Sigmoid colon (tissue), 7 donors: ENCODE measurements at regions of chr10 and their contacts with region 1.

Region 1: DNA sequence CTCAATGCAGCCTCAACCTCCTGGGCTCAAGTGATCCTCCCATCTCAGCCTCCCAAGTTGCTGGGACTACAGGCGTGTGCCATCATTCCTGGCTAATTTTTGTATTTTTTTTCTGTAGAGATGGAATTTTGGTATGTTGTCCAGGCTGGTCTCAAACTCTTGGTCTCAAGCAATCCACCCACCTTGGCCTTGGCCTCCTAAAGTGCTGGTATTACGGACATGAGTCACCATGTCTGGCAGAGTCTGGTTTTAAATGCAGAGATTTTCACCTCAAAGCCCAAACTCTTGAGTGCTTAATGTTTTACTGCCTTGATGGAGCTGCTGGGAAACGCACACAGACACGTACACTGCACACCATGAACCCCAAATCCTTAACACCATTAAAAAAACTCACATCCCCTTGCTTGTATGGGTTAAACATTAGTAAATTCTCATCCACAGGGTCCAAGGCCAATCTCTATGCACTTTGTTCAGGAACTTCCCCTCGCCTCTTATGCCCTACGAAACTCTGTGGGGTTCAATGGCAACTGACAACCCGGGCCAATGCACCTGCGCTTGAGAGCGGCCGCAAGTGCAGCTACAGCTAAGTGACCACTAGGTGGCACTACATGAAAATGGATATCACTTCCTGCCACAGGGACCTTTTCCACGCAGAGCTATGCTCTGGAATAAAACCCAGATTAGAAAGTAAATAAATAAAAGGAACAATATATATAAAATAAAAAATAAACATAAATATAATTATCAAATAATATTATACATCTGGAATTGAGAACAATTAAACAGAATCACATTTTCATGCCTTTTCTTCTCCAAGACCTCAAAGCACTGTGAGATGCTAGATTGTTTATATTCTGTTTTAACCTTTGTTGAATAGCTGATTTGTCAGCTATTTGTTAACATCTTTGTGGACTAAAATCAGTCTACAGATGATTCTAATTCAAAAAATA is 66.9 kb upstream of the AFAP1L2 start:
- DNase-seq: peak; percentile 76
- H3K4me3 ChIP-seq: no peak overlapping the region
- H3K27ac ChIP-seq: no peak overlapping the region
- H3K4me1 ChIP-seq: peaks cover 0 to 3% (median 0%) of the 10 kb centered on the region in 4 donors
- H3K27me3 ChIP-seq: no peaks in the 10 kb centered on the region
- CTCF ChIP-seq: peak in 3 of 4 experiments; percentile 77 to 82 (median 82)
- EP300 ChIP-seq: no peak
- POLR2A ChIP-seq: no peak

Region 2: DNA sequence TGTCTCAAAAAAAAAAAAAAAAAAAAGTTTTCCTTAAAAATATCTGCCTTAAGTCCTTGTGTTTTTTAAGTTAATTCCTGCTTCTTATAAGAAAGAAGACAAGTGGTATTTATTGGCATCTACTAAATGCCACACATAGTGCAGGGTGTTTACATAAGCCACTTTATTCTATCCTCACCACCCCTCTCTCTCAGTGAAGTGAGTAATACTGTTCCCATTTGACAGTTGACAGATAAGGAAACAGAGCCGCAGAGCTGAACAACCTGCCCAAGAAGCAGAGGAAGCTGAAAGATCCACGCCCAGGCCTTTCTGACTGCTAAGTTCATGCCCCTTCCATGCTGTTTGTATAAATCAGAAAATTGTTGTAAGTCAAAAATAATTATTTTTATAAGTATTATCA is 132.7 kb after region 1 on chr10:
- intact Hi-C with region 1: no loop called
- DNase-seq: no peak
- H3K4me3 ChIP-seq: no peak overlapping the region
- H3K27ac ChIP-seq: peak overlapping the region in 2 of 4 donors; percentile 34 to 52
- H3K4me1 ChIP-seq: peaks cover 0 to 24% (median 5%) of the 10 kb centered on the region in 4 donors
- H3K27me3 ChIP-seq: no peaks in the 10 kb centered on the region
- CTCF ChIP-seq: no peak
- EP300 ChIP-seq: no peak
- POLR2A ChIP-seq: no peak

Region 3: DNA sequence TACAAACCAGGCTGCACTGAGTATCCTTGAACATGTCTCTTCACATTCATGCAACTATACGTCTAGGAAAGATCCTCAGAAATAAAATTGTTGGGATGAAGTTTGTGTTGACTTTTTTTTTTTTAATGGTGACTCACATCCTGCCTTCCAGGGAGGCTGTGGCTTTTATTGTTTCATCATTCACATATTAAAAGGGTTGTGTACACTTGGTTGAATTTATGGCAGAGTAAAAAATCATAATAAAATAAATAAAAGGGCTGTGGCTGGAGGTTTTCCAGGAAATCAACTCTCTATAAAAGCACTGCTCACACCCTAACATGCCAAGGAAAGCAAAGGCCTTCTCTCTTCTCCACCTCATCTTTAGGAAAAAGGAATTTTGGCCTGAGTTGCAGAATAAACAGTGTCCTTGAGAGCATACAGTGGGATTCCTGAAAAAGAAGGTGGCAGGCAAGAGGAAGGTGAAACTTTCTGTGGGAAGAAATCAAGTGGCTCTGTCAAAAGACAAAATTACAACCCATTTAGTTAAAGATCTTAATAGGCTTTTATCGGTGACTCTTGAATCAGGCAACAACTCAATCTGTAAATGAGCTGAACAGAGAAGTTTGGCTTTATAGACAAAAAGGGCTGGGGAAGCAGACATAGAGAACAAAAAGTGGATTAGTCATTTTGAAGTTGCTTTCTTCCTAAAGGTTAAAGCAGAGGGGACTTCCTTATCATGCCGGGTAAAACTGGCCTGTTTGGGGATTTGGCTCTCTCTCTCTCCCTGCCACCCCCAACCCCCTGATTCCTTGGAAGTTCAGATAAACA is 308.8 kb after region 1 on chr10:
- intact Hi-C with region 1: loop called (anchors 5 kb)
- DNase-seq: no peak
- H3K4me3 ChIP-seq: no peak overlapping the region
- H3K27ac ChIP-seq: peak overlapping the region in 3 of 4 donors; percentile 45 to 52 (median 51)
- H3K4me1 ChIP-seq: peaks cover 0 to 13% (median 6%) of the 10 kb centered on the region in 4 donors
- H3K27me3 ChIP-seq: no peaks in the 10 kb centered on the region
- CTCF ChIP-seq: no peak
- EP300 ChIP-seq: no peak
- POLR2A ChIP-seq: no peak

Region 4: GRCh38 chr10:115129752-115130151 is 658.5 kb after region 1 on chr10:
- intact Hi-C with region 1: loop called (anchors 10 kb)
- DNase-seq: no peak
- H3K4me3 ChIP-seq: no peak overlapping the region
- H3K27ac ChIP-seq: no peak overlapping the region
- H3K4me1 ChIP-seq: no peaks in the 10 kb centered on the region
- H3K27me3 ChIP-seq: no peaks in the 10 kb centered on the region
- CTCF ChIP-seq: peak in 2 of 4 experiments; percentile 13 to 18
- EP300 ChIP-seq: no peak
- POLR2A ChIP-seq: no peak